ENCODE measurements at regions of chr7 and their contacts with region 1.

Region 1: DNA sequence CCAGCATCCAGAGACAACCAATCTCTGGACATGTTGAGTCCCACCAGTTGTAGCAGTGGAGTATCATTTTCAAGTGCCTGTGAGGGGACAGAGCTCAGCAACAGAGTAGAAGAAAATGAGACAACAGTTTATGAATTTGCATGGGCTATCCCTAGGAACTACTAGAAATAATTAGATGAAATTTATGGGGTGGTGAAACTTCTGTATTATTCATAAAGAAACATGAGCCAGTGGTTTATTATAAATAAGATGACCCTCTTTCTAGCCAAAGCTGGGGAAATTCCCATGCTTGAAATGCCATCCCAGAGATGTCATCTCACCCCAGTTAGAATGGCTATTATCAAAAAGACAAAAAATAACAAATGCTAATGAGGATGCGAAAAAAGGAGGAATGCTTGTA is 55.1 kb upstream of the ITGB8 start:
- DNase-seq: no peak
- ATAC-seq: no peak
- H3K4me3 Mint-ChIP-seq: no peak overlapping the region
- H3K27ac Mint-ChIP-seq: no peak overlapping the region
- H3K4me1 Mint-ChIP-seq: peaks cover 8% of the 10 kb centered on the region
- H3K27me3 Mint-ChIP-seq: no peaks in the 10 kb centered on the region
- CTCF ChIP-seq: no peak

Region 2: GRCh38 chr7:20260223-20260622 is 15.4 kb before region 1 on chr7:
- CTCF ChIA-PET with region 1: no interaction called
- POLR2A ChIA-PET with region 1: no interaction called
- intact Hi-C with region 1: loop called (anchors 2 kb)
- DNase-seq: no peak
- ATAC-seq: no peak
- H3K4me3 Mint-ChIP-seq: no peak overlapping the region
- H3K27ac Mint-ChIP-seq: no peak overlapping the region
- H3K4me1 Mint-ChIP-seq: no peaks in the 10 kb centered on the region
- H3K27me3 Mint-ChIP-seq: no peaks in the 10 kb centered on the region
- CTCF ChIP-seq: no peak